AG04449 (cell line): ENCODE measurements at regions of chr11 and their contacts with region 1.

Region 1: GRCh38 chr11:114280696-114281095 is 15.5 kb upstream of the NNMT start:
- DNase-seq: no peak
- H3K4me3 ChIP-seq: no peak overlapping the region
- CTCF ChIP-seq: peak; percentile 83

Region 2: DNA sequence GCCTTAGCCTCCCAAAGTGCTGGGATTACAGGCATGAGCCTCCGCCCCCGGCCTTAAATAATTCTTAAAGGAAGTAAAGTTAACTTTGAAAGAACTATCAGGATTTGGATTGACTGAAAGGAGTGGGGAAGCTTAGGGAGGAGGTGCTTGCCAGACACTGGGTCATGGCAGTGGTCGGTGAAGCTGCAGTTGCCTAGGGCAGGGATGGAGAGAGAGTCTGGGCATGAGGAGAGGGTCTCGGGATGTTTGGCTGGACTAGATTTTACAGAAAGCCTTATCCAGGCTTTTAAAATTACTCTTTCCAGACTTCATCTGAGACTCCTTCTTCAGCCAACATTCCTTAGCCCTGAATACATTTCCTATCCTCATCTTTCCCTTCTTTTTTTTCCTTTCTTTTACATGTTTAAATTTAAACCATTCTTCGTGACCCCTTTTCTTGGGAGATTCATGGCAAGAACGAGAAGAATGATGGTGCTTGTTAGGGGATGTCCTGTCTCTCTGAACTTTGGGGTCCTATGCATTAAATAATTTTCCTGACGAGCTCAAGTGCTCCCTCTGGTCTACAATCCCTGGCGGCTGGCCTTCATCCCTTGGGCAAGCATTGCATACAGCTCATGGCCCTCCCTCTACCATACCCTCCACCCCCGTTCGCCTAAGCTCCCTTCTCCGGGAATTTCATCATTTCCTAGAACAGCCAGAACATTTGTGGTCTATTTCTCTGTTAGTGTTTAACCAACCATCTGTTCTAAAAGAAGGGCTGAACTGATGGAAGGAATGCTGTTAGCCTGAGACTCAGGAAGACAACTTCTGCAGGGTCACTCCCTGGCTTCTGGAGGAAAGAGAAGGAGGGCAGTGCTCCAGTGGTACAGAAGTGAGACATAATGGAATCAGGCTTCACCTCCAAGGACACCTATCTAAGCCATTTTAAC is 15.2 kb after region 1 on chr11 and contains the start of gene NNMT:
- CTCF ChIA-PET with region 1: interaction called, 27 read pairs
- POLR2A ChIA-PET with region 1: interaction called, 9 read pairs
- DNase-seq: peak; percentile 95
- H3K4me3 ChIP-seq: peak within 1 kb of the TSS; percentile 83
- CTCF ChIP-seq: peak; percentile 23

Region 3: DNA sequence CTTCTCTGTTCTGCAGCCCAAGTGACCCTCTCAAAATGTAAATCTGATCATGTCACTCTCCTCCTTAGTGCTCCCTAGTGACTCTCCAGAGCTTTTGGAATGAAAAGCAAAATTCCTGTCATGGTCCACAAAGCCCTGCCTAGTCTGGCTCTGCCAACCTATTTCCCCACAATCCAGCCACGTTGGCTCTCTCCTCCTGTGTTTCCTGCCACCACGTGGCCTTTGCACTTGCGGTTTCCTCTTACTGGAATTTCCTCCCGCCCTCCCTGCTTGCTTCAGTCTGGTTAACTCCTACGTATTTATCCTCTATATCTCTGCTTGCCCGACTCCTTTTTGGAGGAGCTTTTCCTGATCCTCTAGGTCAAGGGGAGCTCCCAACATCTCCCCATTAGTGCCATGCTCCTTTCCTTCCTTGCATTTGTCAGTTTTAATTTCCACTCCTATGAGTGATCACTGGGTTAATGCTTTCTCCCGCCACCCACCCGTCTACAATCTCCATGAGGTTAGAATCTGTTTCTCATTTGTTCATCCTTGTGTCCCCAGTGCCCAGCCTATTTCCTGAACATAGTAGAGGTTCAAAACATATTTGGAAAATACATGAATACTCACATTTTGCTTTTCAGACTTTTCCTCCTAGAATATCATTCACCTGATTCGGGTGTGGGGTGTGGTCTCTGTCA is 27.0 kb after region 1 on chr11:
- CTCF ChIA-PET with region 1: interaction called, 10 read pairs
- POLR2A ChIA-PET with region 1: interaction called, 3 read pairs
- DNase-seq: peak; percentile 78
- H3K4me3 ChIP-seq: peak overlapping the region; percentile 19
- CTCF ChIP-seq: no peak

Region 4: DNA sequence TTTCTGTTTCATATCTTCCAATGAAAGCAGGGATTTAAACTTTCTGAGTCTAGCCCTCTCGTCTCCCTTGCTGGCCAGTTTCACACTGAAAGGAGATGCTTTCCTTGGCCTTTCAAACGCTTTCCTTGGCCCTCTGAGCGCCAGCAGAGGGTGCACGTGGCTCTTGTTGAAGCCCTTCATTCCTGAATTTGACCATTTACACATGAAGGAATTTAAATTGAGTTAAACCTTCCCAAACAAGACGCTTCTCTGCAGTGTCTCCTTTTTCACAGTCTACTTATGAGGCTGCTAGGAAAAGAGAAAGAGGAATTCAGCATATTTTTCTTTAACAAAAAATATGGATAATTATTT is 37.1 kb after region 1 on chr11:
- CTCF ChIA-PET with region 1: interaction called, 24 read pairs
- POLR2A ChIA-PET with region 1: interaction called, 3 read pairs
- DNase-seq: no peak
- H3K4me3 ChIP-seq: no peak overlapping the region
- CTCF ChIP-seq: peak; percentile 69

Region 5: GRCh38 chr11:114340311-114341131 is 59.8 kb after region 1 on chr11:
- CTCF ChIA-PET with region 1: interaction called, 16 read pairs
- POLR2A ChIA-PET with region 1: no interaction called
- DNase-seq: no peak
- H3K4me3 ChIP-seq: no peak overlapping the region
- CTCF ChIP-seq: peak; percentile 72

Region 6: GRCh38 chr11:114762408-114762807 is 481.7 kb after region 1 on chr11:
- CTCF ChIA-PET with region 1: interaction called, 18 read pairs
- POLR2A ChIA-PET with region 1: no interaction called
- DNase-seq: peak; percentile 2
- H3K4me3 ChIP-seq: no peak overlapping the region
- CTCF ChIP-seq: peak; percentile 84